GM23248 (cell line): ENCODE measurements at regions of chr11 and their contacts with region 1.

Region 1: GRCh38 chr11:78139422-78140391 is at the start of gene ALG8:
- DNase-seq: peak; percentile 100
- H3K4me3 ChIP-seq: peak within 1 kb of the TSS; percentile 92
- H3K27ac ChIP-seq: peak within 1 kb of the TSS; percentile 81
- H3K4me1 ChIP-seq: peaks cover 11% of the 10 kb centered on the region
- H3K27me3 ChIP-seq: no peaks in the 10 kb centered on the region
- total RNA-seq, gene ALG8: 41.6 and 42.2 TPM in 2 replicates

Region 2: DNA sequence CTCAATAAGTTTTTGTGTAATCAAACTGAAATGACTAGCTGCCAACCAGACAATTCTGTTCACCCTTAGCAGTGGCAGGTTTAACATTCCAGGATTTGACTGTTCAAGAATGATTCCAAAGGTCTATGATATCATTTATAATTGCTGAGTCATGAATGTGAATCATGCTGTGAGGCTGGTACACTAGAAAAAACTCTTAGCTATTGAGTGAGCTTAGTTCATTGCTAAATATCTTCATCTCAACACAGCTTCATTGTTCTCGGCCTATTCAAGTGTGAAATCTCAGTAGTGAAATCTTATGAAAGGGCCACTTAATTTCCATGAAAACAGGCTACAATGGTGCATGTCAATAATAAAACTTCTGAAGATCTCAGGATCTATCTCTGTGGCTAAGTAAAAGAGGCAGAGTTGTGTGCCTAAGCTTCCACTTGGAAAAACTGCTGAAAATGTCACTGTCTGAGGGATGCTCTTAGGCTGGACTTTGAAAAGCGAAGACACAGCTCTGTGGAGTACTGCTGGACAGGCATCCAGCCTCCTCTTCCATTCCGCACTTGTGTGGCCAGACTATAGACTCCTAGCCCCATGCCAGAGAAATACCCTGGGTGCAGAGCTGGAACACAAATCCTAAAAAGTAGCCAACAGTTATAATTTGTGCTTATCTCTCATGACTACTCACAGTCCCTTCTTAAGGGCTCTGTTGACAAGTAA is 537.2 kb before region 1 on chr11:
- in situ Hi-C with region 1: no loop called
- DNase-seq: peak; percentile 89
- H3K4me3 ChIP-seq: no peak overlapping the region; the same call in 1 of the 2 replicates
- H3K27ac ChIP-seq: peak overlapping the region; percentile 72
- H3K4me1 ChIP-seq: peaks cover 21% of the 10 kb centered on the region
- H3K27me3 ChIP-seq: no peaks in the 10 kb centered on the region

Region 3: GRCh38 chr11:77758331-77758730 is 381.4 kb before region 1 on chr11:
- in situ Hi-C with region 1: no loop called
- DNase-seq: no peak
- H3K4me3 ChIP-seq: no peak overlapping the region
- H3K27ac ChIP-seq: no peak overlapping the region
- H3K4me1 ChIP-seq: peaks cover 7% of the 10 kb centered on the region; the same call in 1 of the 2 replicates
- H3K27me3 ChIP-seq: no peaks in the 10 kb centered on the region

Region 4: DNA sequence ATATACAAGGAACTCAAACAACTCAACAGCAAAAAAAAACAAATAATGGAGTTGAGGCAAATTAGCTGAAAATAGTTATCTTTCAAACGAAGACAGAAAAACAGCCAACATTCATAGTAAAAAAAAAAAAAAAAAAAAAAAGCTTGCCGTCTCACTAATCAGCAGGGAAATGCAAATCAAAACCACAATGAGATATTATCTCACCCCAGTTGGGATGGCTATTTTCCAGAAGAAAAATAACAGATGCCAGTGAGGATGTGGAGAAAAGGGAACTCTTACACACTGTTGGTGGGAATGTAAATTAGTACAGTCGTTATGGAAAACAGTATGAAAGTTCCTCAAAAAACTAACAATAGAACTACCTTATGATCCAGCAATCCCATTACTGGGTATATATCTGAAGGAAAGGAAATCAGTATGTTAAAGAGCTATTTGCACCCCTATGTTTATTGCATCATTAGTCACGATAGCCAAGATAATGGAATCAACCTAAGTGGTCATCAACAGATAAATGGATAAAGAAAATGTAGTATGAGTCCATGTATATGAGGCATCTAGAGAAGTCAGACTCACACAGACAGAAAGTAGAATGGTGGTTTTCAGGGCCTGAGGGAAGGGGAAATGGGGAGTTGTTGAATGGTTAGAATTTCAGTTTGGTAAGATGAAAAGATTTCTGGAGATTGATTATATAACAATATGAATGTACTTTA is 105.0 kb after region 1 on chr11:
- in situ Hi-C with region 1: no loop called
- DNase-seq: no peak
- H3K4me3 ChIP-seq: no peak overlapping the region
- H3K27ac ChIP-seq: no peak overlapping the region
- H3K4me1 ChIP-seq: peaks cover 11% of the 10 kb centered on the region; the same call in 1 of the 2 replicates
- H3K27me3 ChIP-seq: no peaks in the 10 kb centered on the region

Region 5: DNA sequence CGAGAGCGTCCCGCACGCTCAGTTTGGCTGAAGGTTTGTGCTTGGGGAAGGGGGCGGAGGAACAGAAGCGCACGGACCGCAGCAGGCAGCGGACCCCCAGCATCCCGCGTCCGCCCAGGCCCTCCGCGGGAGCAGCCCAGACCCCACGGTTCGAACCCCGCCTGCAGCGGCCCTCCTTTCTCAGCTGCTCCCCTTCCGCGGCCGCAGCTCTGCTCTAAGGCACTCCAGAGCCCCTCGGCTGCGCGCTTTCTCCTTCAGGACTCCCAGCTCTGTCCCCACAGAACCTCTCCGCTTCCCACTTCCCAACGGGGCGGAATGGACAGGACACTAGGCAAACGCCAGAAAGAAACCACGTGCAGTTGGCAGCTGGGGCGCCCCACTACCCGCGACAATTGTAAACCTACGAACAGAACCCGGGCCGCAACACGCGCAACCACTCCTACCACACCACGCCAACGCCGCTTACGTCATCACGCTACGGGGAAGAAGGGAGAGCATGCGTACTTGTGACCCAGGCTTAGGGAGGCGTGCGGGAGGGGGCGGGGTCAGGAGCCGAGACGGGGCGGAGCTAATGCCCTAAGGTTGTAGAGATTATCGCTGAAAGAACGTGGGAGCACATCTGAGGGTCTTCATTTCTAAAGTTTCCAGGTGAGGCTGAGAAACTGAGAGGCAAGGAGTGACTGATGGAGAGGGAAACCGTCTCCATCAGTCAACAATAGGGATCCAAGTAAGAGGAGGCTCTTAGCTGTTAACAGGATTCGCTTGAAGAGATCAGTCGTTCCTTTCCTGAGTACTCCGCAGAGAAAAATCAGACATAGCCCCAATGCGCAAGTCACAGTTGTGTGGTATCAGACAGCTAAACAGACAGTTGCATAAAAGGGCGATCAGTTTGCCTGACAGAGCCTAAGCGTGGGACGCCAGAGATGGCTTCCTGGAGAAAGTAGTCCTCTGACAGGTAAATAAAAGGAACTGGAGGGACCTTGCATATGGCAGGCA is 435.0 kb after region 1 on chr11 and contains the start of gene NARS2:
- in situ Hi-C with region 1: loop called (anchors 25 kb)
- DNase-seq: peak; percentile 98
- H3K4me3 ChIP-seq: peak within 1 kb of the TSS; percentile 84
- H3K27ac ChIP-seq: peak within 1 kb of the TSS; percentile 66
- H3K4me1 ChIP-seq: no peaks in the 10 kb centered on the region
- H3K27me3 ChIP-seq: no peaks in the 10 kb centered on the region
- total RNA-seq, gene NARS2: 13.0 and 15.3 TPM in 2 replicates

Region 6: GRCh38 chr11:78651923-78652842 is 512.5 kb after region 1 on chr11:
- in situ Hi-C with region 1: no loop called
- DNase-seq: no peak
- H3K4me3 ChIP-seq: no peak overlapping the region
- H3K27ac ChIP-seq: no peak overlapping the region
- H3K4me1 ChIP-seq: no peaks in the 10 kb centered on the region
- H3K27me3 ChIP-seq: 0 out of 2 replicates have a peak, but pooled peaks cover 5% of the 10 kb centered on the region